AG04449 (cell line): ENCODE measurements at regions of chr20 and their contacts with region 1.

Region 1: DNA sequence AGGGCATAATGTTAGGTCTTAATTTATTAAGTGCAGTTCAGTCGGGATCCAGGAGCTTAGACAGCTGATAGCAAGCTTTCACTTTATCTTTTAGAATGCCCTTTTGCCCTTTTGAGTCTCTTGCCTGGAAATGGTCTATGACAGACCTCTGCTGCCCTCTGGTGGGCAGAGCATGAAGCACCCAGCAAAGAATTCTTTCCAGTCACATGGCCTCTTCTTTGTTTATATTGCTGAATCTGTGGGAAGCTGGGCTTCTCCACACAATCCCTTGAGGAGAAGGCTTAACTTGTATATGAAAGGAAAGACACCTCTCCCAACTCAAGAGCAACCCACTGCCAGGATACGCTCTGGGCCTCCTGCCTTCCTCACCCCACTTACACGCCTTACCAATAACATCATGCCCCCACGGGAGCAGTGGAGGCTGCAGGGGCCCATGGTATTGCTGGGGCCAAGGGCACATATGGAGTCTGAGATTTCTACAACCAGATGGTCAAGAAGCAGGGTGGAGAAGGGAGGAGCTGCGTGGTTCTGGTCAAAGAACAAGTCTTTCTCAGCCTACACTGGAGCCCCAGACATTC is 20.4 kb downstream of the WFDC3 start:
- DNase-seq: peak; percentile 26
- H3K4me3 ChIP-seq: no peak overlapping the region; the same call in 1 of the 2 replicates
- CTCF ChIP-seq: peak; percentile 79

Region 2: GRCh38 chr20:45193331-45193730 is 577.9 kb before region 1 on chr20:
- CTCF ChIA-PET with region 1: no interaction called
- POLR2A ChIA-PET with region 1: no interaction called
- DNase-seq: no peak
- H3K4me3 ChIP-seq: no peak overlapping the region
- CTCF ChIP-seq: no peak

Region 3: DNA sequence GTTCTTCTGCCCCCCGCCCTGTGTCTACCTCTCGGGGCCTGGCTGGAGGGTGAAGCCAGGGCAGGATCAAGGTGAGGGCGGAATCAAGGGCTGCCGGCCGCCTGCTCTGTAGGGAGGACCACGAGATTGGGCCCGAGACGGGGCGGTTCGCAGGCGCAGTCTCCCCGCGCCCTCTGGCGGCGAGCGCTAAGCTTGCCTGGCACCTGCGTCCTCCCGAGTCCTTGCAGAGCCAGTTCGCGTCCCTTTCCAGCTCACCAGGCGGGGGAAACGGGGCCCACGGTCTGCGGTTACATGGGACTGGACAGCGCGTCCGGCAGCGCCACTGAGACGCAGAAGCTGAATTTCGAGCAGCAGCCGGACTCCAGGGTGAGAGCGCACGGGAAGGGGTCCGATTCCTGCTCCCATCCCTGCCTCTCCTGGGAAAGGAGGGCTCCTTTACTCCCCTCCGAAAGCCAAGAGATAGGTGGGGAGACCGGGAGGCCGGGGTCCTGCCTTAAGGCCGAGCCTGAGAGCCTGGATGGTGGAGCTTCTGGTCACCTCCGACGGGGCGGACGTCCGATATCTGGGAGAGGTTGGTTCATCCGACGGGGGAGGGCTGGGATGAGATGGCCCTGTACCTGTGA is 459.6 kb before region 1 on chr20:
- CTCF ChIA-PET with region 1: interaction called, 77 read pairs
- POLR2A ChIA-PET with region 1: interaction called, 3 read pairs
- DNase-seq: no peak
- H3K4me3 ChIP-seq: no peak overlapping the region
- CTCF ChIP-seq: peak; percentile 94

Region 4: GRCh38 chr20:45373353-45374100 is 397.7 kb before region 1 on chr20:
- CTCF ChIA-PET with region 1: interaction called, 41 read pairs
- POLR2A ChIA-PET with region 1: no interaction called
- DNase-seq: no peak
- H3K4me3 ChIP-seq: peak overlapping the region; percentile 55
- CTCF ChIP-seq: peak; percentile 95

Region 5: GRCh38 chr20:45538209-45538799 is 233.0 kb before region 1 on chr20:
- CTCF ChIA-PET with region 1: interaction called, 12 read pairs
- POLR2A ChIA-PET with region 1: no interaction called
- DNase-seq: no peak
- H3K4me3 ChIP-seq: no peak overlapping the region
- CTCF ChIP-seq: no peak

Region 6: GRCh38 chr20:45592574-45593189 is 178.6 kb before region 1 on chr20:
- CTCF ChIA-PET with region 1: interaction called, 41 read pairs
- POLR2A ChIA-PET with region 1: no interaction called
- DNase-seq: no peak
- H3K4me3 ChIP-seq: no peak overlapping the region
- CTCF ChIP-seq: peak; percentile 28

Region 7: DNA sequence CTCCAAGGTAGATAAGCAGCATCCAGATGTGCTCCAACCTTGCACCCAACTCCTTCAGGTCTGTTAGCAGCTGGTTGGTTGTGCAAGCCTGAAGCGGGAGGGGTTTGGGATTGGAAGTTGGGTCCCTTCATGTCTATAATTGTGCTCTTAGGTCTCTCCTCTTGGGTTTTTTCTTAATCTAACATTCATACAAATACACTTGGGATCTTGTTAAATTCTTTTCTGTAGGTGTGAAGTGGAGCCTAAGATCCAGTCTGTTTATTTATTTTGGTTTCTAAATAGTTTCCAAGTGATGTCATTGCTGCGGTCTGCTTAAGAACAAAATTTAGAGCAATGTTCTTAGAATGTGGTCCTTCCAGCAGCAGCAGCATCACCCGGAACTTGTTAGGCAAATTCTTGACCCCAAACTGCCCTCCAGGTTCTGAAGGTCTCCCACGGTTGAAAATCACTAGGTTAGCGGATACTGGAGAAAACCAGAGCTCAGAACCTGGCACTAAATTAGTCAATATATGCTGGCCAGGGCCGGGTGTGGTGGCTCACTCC is 46.5 kb after region 1 on chr20:
- CTCF ChIA-PET with region 1: interaction called, 13 read pairs
- POLR2A ChIA-PET with region 1: no interaction called
- DNase-seq: peak; percentile 63
- H3K4me3 ChIP-seq: no peak overlapping the region
- CTCF ChIP-seq: no peak

Region 8: GRCh38 chr20:45933266-45934045 is 162.2 kb after region 1 on chr20:
- CTCF ChIA-PET with region 1: no interaction called
- POLR2A ChIA-PET with region 1: no interaction called
- DNase-seq: no peak
- H3K4me3 ChIP-seq: peak overlapping the region; percentile 99
- CTCF ChIP-seq: peak; percentile 22